ENCODE measurements at regions of chr17 and their contacts with region 1.

Region 1: DNA sequence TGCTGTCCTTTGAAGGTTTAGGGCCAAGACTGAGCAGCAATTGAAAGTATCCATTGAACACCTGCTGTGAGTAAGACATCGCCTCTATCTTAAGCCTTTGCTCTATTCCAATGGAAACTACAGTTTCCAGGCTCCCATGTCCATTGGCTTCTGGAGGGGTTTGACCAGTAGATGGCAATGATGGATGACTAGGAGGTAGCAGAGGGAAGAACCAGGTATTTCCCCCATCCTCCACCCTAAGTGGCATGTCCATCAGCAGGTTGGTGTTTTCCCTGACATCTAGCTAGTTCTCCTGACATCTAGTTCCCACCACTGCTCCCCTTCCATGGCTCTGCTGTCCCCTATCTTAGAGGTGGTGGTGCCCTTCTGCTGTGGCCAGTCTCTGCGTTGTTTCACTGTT is 58.7 kb downstream of the CENPV start:
- DNase-seq: no peak
- ATAC-seq: no peak
- H3K4me3 ChIP-seq: no peak overlapping the region
- H3K4me3 Mint-ChIP-seq: no peak overlapping the region
- H3K27ac ChIP-seq: no peak overlapping the region
- H3K27ac Mint-ChIP-seq: no peak overlapping the region
- H3K4me1 ChIP-seq: peaks cover 13 to 19% of the 10 kb centered on the region in 2 donors
- H3K4me1 Mint-ChIP-seq: peaks cover 18% of the 10 kb centered on the region
- H3K27me3 ChIP-seq: no peaks in the 10 kb centered on the region
- H3K27me3 Mint-ChIP-seq: no peaks in the 10 kb centered on the region
- CTCF ChIP-seq: no peak

Region 2: DNA sequence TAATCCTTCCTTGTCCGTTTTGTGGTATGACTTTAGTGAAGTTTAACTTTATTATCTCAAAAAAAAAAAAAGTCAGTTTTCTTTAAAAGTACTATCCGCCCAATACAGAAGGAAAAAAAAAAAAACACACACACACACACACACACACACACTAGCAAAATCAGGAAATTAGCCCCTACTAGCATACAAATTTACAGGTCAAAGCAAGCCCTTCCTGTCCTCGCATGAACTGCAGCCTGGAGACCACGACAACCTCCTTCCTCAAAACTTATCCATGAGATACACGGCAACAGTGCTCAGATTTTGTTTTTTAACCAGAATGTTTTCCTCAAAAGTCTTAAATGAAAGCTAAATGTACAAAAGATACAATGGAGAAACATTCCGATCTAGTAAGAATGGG is 95.5 kb before region 1 on chr17:
- CTCF ChIA-PET with region 1: no interaction called
- POLR2A ChIA-PET with region 1: no interaction called
- intact Hi-C with region 1: no loop called
- DNase-seq: peak; percentile 48
- ATAC-seq: no peak
- H3K4me3 ChIP-seq: no peak overlapping the region
- H3K4me3 Mint-ChIP-seq: peak overlapping the region; percentile 73
- H3K27ac ChIP-seq: peak overlapping the region; percentile 28 to 82
- H3K27ac Mint-ChIP-seq: peak overlapping the region; percentile 78
- H3K4me1 ChIP-seq: peaks cover 34 to 37% of the 10 kb centered on the region in 2 donors
- H3K4me1 Mint-ChIP-seq: peaks cover 57% of the 10 kb centered on the region
- H3K27me3 ChIP-seq: no peaks in the 10 kb centered on the region
- H3K27me3 Mint-ChIP-seq: no peaks in the 10 kb centered on the region
- CTCF ChIP-seq: no peak

Region 3: GRCh38 chr17:16258901-16259300 is 35.7 kb before region 1 on chr17:
- CTCF ChIA-PET with region 1: no interaction called
- POLR2A ChIA-PET with region 1: interaction called, 10 read pairs
- intact Hi-C with region 1: no loop called
- DNase-seq: no peak
- ATAC-seq: no peak
- H3K4me3 ChIP-seq: no peak overlapping the region
- H3K4me3 Mint-ChIP-seq: no peak overlapping the region
- H3K27ac ChIP-seq: no peak overlapping the region
- H3K27ac Mint-ChIP-seq: no peak overlapping the region
- H3K4me1 ChIP-seq: no peaks in the 10 kb centered on the region
- H3K4me1 Mint-ChIP-seq: peaks cover 1% of the 10 kb centered on the region
- H3K27me3 ChIP-seq: no peaks in the 10 kb centered on the region
- H3K27me3 Mint-ChIP-seq: no peaks in the 10 kb centered on the region
- CTCF ChIP-seq: no peak

Region 4: DNA sequence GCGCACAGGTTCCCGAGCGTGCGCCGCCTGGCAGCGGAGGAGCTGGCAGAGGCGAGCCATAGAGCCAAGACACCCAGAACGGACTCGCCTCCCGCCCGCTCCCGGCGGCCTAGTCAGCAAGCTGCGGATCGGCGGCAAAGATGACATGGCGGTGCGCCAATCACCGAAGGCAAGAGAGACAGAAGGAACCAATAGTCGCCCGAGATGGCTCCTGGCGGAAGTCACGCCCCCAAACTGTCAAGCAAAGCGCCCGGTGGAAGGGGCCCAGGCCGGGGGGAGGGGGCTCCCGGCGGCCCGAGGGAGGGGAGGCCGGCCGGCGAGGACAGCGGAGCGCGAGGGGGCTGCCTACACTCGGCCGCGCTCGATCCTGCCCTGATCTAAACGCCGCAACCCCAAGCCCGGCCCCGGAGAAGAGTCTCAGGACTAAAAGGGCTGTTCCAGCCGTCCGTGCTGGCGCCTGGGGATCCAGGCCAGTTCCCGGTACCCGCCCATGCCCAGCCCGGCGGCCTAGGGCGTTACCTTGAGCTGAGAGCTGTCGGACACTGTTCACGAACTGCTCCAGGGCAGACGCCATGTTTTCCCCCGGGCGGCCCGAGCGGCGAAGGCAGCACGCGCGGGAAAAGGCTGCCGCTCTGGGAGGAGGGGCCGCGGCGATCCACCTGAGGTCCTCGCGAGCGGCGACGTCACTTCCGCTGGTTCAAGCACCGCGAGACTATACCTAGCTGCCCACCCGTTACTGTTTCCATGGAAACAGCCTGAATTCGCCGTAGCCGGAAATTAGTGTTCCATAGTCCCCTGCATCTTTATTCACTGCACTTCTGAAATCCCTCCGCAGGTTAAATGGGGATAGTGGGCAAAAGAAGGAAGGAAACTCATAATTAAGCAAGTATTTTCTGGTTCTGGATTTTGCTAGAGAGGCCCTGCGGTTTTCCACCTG is 986.3 kb after region 1 on chr17 and contains the start of gene COPS3:
- CTCF ChIA-PET with region 1: no interaction called
- POLR2A ChIA-PET with region 1: no interaction called
- intact Hi-C with region 1: no loop called
- DNase-seq: peak; percentile 99
- ATAC-seq: peak; percentile 88
- H3K4me3 ChIP-seq: peak within 1 kb of the TSS; percentile 67 to 99 (median 98)
- H3K4me3 Mint-ChIP-seq: peak within 1 kb of the TSS; percentile 86
- H3K27ac ChIP-seq: peak within 1 kb of the TSS; percentile 87 to 98
- H3K27ac Mint-ChIP-seq: peak within 1 kb of the TSS; percentile 85
- H3K4me1 ChIP-seq: peaks cover 20% of the 10 kb centered on the region in 2 donors
- H3K4me1 Mint-ChIP-seq: peaks cover 36% of the 10 kb centered on the region
- H3K27me3 ChIP-seq: no peaks in the 10 kb centered on the region
- H3K27me3 Mint-ChIP-seq: no peaks in the 10 kb centered on the region
- CTCF ChIP-seq: no peak
- total RNA-seq, gene COPS3: 45.5 and 46.9 TPM in 2 replicates

Measured in B cell (primary cell).